Activated CD8-positive, alpha-beta T cell treated with anti-CD3 and anti-CD28 coated beads, Interleukin-2, amount 10 ng/mL, durations not matched to agents 7 days and 5 days (primary cell): ENCODE measurements at regions of chr1 and their contacts with region 1.

Region 1: GRCh38 chr1:8015036-8015808 is 10.9 kb downstream of the ERRFI1 start:
- DNase-seq: peak; percentile 62
- ATAC-seq: peak; percentile 65
- H3K4me3 Mint-ChIP-seq: no peak overlapping the region
- H3K27ac Mint-ChIP-seq: no peak overlapping the region
- H3K4me1 Mint-ChIP-seq: no peaks in the 10 kb centered on the region
- H3K27me3 Mint-ChIP-seq: peaks cover 19% of the 10 kb centered on the region

Region 2: DNA sequence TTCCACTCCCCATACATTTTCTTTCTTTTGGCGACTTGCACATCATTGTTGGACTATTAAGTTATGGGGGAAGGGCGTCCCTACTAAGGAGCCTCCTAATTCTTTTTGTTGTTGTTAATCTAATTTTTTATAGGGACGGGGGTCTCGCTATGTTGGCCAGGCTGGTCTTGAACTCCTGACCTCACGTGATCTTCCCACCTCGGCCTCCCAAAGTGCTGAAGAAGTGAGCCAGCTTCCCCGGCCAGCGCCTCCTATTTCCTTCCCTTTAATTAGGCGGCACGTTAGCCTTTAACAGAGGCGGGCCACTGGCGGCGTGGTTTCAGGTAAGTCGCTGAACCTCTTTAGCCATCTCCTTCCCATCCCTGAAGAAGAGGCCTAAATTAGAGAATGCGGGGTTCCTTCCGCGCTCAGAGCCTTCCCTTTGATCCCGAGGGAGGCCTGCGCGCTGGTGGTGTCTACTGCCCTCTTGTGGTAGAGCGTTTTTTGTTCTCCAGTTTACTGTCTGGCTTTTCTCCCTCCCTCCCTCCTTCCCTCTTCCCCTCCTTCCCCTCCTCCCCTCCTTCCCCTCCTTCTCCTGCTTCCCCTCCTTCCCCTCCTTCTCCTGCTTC is 112.6 kb before region 1 on chr1:
- CTCF ChIA-PET with region 1: no interaction called
- POLR2A ChIA-PET with region 1: no interaction called
- DNase-seq: peak; percentile 74
- ATAC-seq: peak; percentile 87
- H3K4me3 Mint-ChIP-seq: peak overlapping the region; percentile 50
- H3K27ac Mint-ChIP-seq: no peak overlapping the region
- H3K4me1 Mint-ChIP-seq: peaks cover 17% of the 10 kb centered on the region
- H3K27me3 Mint-ChIP-seq: no peaks in the 10 kb centered on the region

Region 3: DNA sequence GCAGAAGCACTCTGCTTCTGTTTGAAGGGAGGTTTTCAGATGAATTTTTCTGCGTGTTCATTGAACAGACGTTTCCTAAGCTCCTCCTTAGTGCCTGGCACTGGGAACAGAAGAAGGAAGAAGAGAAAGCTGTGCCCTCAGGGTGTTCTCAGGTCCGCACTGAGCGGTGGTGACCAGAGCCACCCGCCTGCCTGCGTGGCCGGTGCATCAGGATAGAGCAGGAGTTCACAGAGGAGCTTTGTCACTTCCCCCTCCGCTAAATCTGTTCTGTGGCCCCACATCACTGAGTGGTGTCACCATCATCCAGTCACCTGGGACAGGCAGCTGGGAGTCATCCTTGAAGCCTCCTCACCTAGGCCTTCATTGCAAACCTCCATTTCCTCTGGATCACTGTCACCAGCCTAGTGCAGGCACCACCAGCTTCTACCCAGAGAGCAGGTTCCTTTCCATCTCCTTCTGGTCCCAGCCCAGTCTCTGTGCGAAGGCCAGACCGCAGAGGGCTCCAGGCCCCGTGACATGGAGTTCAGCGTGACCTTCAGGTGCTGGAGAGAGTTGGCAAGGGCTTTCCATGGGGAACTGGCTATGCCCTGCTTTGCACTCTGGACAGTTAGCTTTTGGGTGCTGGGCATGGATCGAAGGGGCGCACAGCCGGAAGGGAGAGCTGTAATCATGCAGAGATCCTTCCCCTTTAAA is 32.0 kb before region 1 on chr1:
- CTCF ChIA-PET with region 1: interaction called, 16 read pairs
- POLR2A ChIA-PET with region 1: no interaction called
- DNase-seq: no peak
- ATAC-seq: no peak
- H3K4me3 Mint-ChIP-seq: no peak overlapping the region
- H3K27ac Mint-ChIP-seq: no peak overlapping the region
- H3K4me1 Mint-ChIP-seq: peaks cover 6% of the 10 kb centered on the region
- H3K27me3 Mint-ChIP-seq: no peaks in the 10 kb centered on the region

Region 4: DNA sequence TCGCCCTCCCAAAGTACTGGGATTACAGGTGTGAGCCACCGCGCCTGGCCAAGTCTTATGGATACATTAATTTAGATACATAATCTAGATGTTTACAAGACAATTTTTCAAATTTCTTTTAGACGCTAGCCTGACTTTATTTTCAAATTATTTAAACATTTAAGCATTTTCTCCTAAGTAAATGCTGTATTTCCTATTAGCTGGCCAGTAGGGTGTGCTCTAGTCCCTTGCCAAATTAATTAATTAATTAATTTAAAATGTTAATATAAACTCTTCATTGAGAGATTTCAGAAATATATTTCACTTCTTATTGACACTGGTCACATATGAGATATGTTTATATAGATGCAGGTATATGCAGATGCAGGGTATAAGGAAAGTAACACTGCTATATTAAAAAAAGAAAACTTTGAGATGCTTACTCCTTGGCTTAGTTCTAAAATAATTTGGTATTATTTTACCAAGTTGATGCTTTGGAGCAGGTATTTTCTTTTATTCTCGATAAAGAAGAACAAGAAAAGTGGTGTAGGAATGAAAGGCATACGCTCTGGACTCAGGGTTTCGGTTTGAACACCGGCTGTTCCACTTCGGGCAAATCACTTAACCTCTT is 16.1 kb after region 1 on chr1:
- CTCF ChIA-PET with region 1: interaction called, 18 read pairs
- POLR2A ChIA-PET with region 1: no interaction called
- DNase-seq: no peak
- ATAC-seq: no peak
- H3K4me3 Mint-ChIP-seq: no peak overlapping the region
- H3K27ac Mint-ChIP-seq: no peak overlapping the region
- H3K4me1 Mint-ChIP-seq: peaks cover 5% of the 10 kb centered on the region
- H3K27me3 Mint-ChIP-seq: peaks cover 23% of the 10 kb centered on the region

Region 5: DNA sequence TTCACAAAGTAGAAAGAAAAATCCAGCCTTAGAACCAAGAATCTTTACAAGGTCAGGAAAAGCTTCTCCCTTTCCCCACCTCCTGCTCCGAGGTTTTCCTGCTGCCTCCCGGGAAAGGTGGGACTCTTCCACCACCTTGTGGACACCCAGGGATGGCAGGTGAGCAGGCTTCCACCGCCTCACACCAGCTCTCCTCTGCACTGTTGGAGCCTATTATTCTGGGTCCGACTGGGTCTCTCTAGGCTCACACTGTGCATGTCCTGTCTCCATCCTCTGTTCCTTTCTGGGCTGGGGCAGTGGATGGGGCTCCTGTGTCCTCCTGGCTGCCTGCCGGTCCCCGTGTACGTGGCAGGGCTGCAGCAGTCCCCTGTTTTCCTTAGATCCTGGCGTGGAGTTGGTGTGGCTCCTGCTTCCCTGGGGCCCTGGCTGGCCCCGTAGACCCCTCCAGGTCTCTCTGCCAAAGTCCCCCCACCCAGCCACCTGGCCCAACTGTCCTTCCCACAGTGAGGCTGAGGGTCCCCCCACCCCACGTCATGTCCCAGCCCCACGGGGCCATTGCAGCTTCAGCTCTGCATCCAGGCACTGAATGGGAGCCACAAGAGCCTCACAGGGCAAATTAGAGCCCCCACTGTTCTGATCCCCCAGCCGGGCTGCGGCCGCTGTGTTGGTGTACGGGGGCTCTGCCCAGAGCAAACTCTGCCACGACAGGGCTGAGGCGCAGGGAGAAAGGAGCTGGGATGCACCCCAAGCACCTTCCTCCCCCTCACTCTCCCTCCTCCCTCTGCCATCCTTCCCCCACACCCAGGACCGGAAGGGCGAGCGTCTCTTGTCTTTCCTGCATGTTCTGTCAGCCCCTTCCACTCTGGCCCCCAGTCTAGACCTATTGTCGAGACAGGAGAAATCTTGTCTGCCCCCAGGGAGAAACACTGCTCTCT is 299.4 kb after region 1 on chr1:
- CTCF ChIA-PET with region 1: interaction called, 95 read pairs
- POLR2A ChIA-PET with region 1: no interaction called
- DNase-seq: peak; percentile 49
- ATAC-seq: no peak
- H3K4me3 Mint-ChIP-seq: no peak overlapping the region
- H3K27ac Mint-ChIP-seq: no peak overlapping the region
- H3K4me1 Mint-ChIP-seq: peaks cover 18% of the 10 kb centered on the region
- H3K27me3 Mint-ChIP-seq: peaks cover 42% of the 10 kb centered on the region